ENCODE measurements at regions of chr3 and their contacts with region 1.

Region 1: GRCh38 chr3:10026084-10026890 is at the start of gene FANCD2:
- DNase-seq: peak; percentile 81 to 92 (median 91)
- H3K4me3 ChIP-seq: peak within 1 kb of the TSS; percentile 81 to 95 (median 92)
- H3K4me3 Mint-ChIP-seq: peak within 1 kb of the TSS; percentile 92 to 95
- H3K27ac ChIP-seq: peak within 1 kb of the TSS; percentile 76 to 96
- H3K27ac Mint-ChIP-seq: peak within 1 kb of the TSS; percentile 95 to 97 (median 97)
- H3K4me1 ChIP-seq: peaks cover 32 to 38% of the 10 kb centered on the region in 2 donors
- H3K4me1 Mint-ChIP-seq: peaks cover 32% of the 10 kb centered on the region
- H3K27me3 ChIP-seq: no peaks in the 10 kb centered on the region
- H3K27me3 Mint-ChIP-seq: no peaks in the 10 kb centered on the region
- CTCF ChIP-seq: no peak
- polyA plus RNA-seq, gene FANCD2: 1.3 to 11.6 (median 2.4) TPM

Region 2: GRCh38 chr3:9932843-9933560 is 93.3 kb before region 1 on chr3:
- intact Hi-C with region 1: loop called in 1 of 2 experiments (anchors 5 kb)
- DNase-seq: peak; percentile 76 to 79 (median 78)
- H3K4me3 ChIP-seq: peak overlapping the region; percentile 41 to 85 (median 69)
- H3K4me3 Mint-ChIP-seq: peak overlapping the region; percentile 92 to 97
- H3K27ac ChIP-seq: peak overlapping the region; percentile 83 to 92
- H3K27ac Mint-ChIP-seq: peak overlapping the region; percentile 94 to 99 (median 97)
- H3K4me1 ChIP-seq: peaks cover 25 to 38% of the 10 kb centered on the region in 2 donors
- H3K4me1 Mint-ChIP-seq: peaks cover 30% of the 10 kb centered on the region
- H3K27me3 ChIP-seq: no peaks in the 10 kb centered on the region
- H3K27me3 Mint-ChIP-seq: peaks cover 0 to 2% (median 0%) of the 10 kb centered on the region in 3 donors
- CTCF ChIP-seq: peak; percentile 87

Region 3: DNA sequence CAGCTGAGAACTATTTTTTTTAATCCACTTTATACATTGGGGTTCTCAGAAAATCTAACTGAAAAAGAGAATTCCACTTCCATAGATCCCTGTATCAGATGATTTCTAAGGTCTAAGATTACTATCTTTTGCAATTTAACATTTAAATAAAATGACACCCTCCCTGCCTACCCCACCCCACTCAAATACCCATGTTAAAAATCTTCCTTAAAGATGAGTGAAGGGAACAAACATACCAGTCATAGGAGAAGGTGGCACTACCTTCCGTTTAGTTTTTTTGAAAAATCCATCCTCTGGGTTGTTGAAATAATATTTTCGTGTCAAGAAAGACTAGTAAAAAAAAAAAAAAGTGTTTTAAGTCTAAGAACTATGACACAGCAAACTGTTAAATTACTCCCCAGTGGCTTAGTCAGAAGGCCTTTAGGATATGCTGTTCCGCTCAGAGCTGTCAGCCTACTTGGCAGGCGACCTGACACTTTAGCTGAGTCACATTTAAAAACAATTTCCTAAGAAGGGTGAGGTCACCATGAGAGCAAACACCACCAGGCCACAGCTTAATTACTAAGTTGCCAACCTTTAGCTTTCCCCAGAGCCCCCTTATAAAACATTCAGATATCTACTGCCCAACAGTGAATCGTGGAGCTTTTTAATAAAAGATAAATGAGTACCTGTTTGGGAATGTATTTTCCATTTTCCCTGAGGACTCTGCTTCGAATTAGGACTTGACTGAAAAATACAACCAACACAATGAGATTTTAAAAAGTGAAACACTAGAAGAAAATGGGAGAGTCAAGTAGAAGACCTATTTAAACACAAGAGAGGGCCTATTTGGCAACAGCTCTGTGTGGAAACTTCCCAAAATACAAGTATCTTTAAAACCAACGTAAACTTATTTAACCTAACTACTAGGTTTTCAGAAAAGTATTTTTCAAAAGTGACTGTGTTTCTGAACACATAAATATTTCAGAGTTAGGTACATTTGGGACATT is 49.3 kb before region 1 on chr3:
- intact Hi-C with region 1: loop called (anchors 5 to 10 kb)
- DNase-seq: peak; percentile 89 to 97 (median 96)
- H3K4me3 ChIP-seq: peak overlapping the region in 1 of 3 experiments; percentile 1
- H3K4me3 Mint-ChIP-seq: peak overlapping the region; percentile 1 to 26
- H3K27ac ChIP-seq: peak overlapping the region; percentile 65 to 81
- H3K27ac Mint-ChIP-seq: peak overlapping the region; percentile 89 to 98 (median 97)
- H3K4me1 ChIP-seq: peaks cover 35 to 44% of the 10 kb centered on the region in 2 donors
- H3K4me1 Mint-ChIP-seq: peaks cover 38% of the 10 kb centered on the region
- H3K27me3 ChIP-seq: no peaks in the 10 kb centered on the region
- H3K27me3 Mint-ChIP-seq: no peaks in the 10 kb centered on the region
- CTCF ChIP-seq: no peak

Region 4: GRCh38 chr3:10010486-10011465 is 15.5 kb before region 1 on chr3:
- intact Hi-C with region 1: loop called (anchors 1 to 2 kb)
- DNase-seq: peak; percentile 90 to 92 (median 91)
- H3K4me3 ChIP-seq: peak overlapping the region; percentile 51 to 82 (median 55)
- H3K4me3 Mint-ChIP-seq: peak overlapping the region; percentile 68 to 82
- H3K27ac ChIP-seq: no peak overlapping the region
- H3K27ac Mint-ChIP-seq: peak overlapping the region in 3 of 7 donors; percentile 35 to 50 (median 48)
- H3K4me1 ChIP-seq: peaks cover 44 to 48% of the 10 kb centered on the region in 2 donors
- H3K4me1 Mint-ChIP-seq: peaks cover 39% of the 10 kb centered on the region
- H3K27me3 ChIP-seq: no peaks in the 10 kb centered on the region
- H3K27me3 Mint-ChIP-seq: peaks cover 0 to 7% (median 3%) of the 10 kb centered on the region in 3 donors
- CTCF ChIP-seq: no peak

Region 5: DNA sequence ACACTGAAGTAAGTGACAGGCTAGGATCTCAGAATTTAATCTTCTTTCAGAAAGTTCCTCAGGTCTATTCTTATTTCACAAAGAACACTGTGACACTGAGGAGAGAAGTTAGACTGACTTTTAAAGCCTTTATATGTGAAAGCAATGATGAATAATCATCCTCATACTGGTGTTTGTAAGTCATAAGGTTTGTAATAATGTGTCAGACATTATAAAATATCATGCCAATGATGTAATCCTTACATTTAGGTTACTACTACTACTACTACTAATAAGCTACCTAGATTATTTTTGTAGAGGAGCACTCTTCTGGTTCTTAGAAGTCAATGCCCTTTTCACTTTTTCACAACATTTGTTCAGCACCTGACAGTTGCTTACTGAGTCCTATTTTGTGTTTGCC is 48.4 kb after region 1 on chr3:
- intact Hi-C with region 1: no loop called
- DNase-seq: no peak
- H3K4me3 ChIP-seq: no peak overlapping the region
- H3K4me3 Mint-ChIP-seq: no peak overlapping the region
- H3K27ac ChIP-seq: no peak overlapping the region
- H3K27ac Mint-ChIP-seq: no peak overlapping the region
- H3K4me1 ChIP-seq: no peaks in the 10 kb centered on the region
- H3K4me1 Mint-ChIP-seq: no peaks in the 10 kb centered on the region
- H3K27me3 ChIP-seq: no peaks in the 10 kb centered on the region
- H3K27me3 Mint-ChIP-seq: no peaks in the 10 kb centered on the region
- CTCF ChIP-seq: no peak

Region 6: DNA sequence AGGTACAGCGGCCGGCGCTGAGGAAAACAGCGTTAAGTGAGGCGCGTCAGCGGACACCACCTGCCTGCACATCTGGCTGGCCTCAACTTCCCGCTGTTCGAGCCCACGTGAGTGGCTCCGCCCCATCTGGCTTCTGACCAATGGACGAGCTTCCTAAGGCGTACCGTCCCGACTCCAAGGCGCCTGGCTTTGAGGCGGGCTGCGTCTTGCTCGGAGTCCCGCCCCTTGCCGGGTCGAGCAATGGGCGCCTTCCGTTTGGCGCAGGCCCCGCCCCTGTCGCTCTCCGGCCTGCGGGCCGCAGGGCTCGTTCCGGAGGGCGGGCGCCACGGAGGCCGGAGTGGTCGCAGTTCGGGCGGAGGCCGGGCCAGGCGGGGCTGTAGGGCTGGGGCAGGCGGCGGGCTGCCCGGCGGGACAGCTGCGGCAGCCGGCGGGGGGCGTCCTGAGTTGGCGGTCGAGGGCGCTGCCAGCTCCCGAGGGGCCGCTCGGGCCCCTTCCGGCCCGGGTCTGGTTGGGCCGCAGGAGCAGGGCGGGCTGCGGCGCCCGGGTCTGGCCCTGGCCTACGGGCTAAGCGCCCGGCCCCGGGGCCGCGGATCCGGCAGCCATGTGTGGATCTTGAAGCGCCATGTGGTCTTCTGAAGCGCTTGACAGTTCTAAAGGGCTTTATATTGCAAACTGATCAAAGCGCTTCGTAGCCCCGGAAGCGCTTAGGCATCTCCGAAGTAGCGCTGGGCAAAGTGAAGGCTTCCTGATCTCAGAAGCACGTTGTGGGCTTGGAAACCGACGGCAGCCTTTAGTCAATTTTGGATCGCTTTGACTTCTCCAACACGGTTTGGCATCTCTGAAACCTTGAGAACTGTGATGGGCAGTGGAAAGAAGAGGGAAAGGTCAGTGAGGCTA is 222.1 kb after region 1 on chr3 and contains the start of gene TATDN2:
- intact Hi-C with region 1: loop called in 1 of 2 experiments (anchors 10 kb)
- DNase-seq: peak; percentile 93 to 97 (median 96)
- H3K4me3 ChIP-seq: peak within 1 kb of the TSS; percentile 64 to 90 (median 80)
- H3K4me3 Mint-ChIP-seq: peak within 1 kb of the TSS; percentile 95 to 97
- H3K27ac ChIP-seq: peak within 1 kb of the TSS; percentile 48 to 89
- H3K27ac Mint-ChIP-seq: peak within 1 kb of the TSS; percentile 90 to 96 (median 92)
- H3K4me1 ChIP-seq: peaks cover 28 to 35% of the 10 kb centered on the region in 2 donors
- H3K4me1 Mint-ChIP-seq: peaks cover 30% of the 10 kb centered on the region
- H3K27me3 ChIP-seq: no peaks in the 10 kb centered on the region
- H3K27me3 Mint-ChIP-seq: no peaks in the 10 kb centered on the region
- CTCF ChIP-seq: no peak
- polyA plus RNA-seq, gene TATDN2: 6.0 to 27.1 (median 6.0) TPM

Measured in CD14-positive monocyte (primary cell).